ENCODE measurements at regions of chr1 and their contacts with region 1.

Region 1: GRCh38 chr1:19715334-19716203 is 50.9 kb downstream of the HTR6 start:
- DNase-seq: peak; percentile 97
- H3K4me3 ChIP-seq: no peak overlapping the region
- H3K27ac ChIP-seq: no peak overlapping the region
- H3K4me1 ChIP-seq: no peaks in the 10 kb centered on the region
- H3K27me3 ChIP-seq: no peaks in the 10 kb centered on the region
- CTCF ChIP-seq: peak; percentile 96 to 98
- POLR2A ChIP-seq: no peak

Region 2: GRCh38 chr1:19728413-19729145 is 13.0 kb after region 1 on chr1:
- CTCF ChIA-PET with region 1: interaction called, 14 read pairs
- POLR2A ChIA-PET with region 1: no interaction called
- dilution Hi-C with region 1: no loop called
- intact Hi-C with region 1: no loop called
- DNase-seq: no peak
- H3K4me3 ChIP-seq: no peak overlapping the region
- H3K27ac ChIP-seq: no peak overlapping the region
- H3K4me1 ChIP-seq: no peaks in the 10 kb centered on the region
- H3K27me3 ChIP-seq: no peaks in the 10 kb centered on the region
- CTCF ChIP-seq: no peak
- POLR2A ChIP-seq: no peak

Region 3: GRCh38 chr1:19811206-19811851 is 95.8 kb after region 1 on chr1:
- CTCF ChIA-PET with region 1: interaction called, 9 read pairs
- POLR2A ChIA-PET with region 1: no interaction called
- dilution Hi-C with region 1: no loop called
- intact Hi-C with region 1: loop called (anchors 1 kb)
- DNase-seq: peak; percentile 38
- H3K4me3 ChIP-seq: no peak overlapping the region
- H3K27ac ChIP-seq: no peak overlapping the region
- H3K4me1 ChIP-seq: no peaks in the 10 kb centered on the region
- H3K27me3 ChIP-seq: no peaks in the 10 kb centered on the region
- CTCF ChIP-seq: peak; percentile 65 to 79
- POLR2A ChIP-seq: no peak

Region 4: DNA sequence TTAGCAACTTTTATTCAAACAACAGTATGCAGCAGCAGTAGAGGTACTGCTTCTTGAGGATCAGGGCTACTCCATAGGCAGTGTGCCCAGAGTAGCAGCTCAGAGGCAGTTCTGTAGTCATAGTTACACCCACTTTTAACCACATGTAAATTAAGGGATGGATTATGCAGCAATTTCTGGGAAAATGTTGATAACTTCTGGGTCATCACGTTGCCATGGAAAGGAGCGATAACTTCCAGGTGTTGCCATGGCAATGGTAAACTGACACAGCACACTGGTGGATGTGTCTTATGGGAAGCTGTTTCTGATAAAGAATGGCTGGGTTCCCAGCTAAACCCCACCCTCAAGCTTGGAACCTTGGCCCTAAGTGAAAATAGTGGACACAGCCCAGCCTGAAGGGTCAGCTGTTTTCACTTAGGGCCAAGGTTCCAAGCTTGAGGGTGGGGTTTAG is 292.8 kb after region 1 on chr1:
- CTCF ChIA-PET with region 1: no interaction called
- POLR2A ChIA-PET with region 1: no interaction called
- dilution Hi-C with region 1: no loop called
- intact Hi-C with region 1: no loop called
- DNase-seq: no peak
- H3K4me3 ChIP-seq: no peak overlapping the region
- H3K27ac ChIP-seq: no peak overlapping the region
- H3K4me1 ChIP-seq: no peaks in the 10 kb centered on the region
- H3K27me3 ChIP-seq: no peaks in the 10 kb centered on the region
- CTCF ChIP-seq: no peak
- POLR2A ChIP-seq: no peak

Region 5: GRCh38 chr1:20329793-20330542 is 614.4 kb after region 1 on chr1:
- CTCF ChIA-PET with region 1: no interaction called
- POLR2A ChIA-PET with region 1: no interaction called
- dilution Hi-C with region 1: no loop called
- intact Hi-C with region 1: no loop called
- DNase-seq: no peak
- H3K4me3 ChIP-seq: no peak overlapping the region
- H3K27ac ChIP-seq: no peak overlapping the region
- H3K4me1 ChIP-seq: no peaks in the 10 kb centered on the region
- H3K27me3 ChIP-seq: peaks cover 0 to 2% of the 10 kb centered on the region in 2 experiments
- CTCF ChIP-seq: no peak
- POLR2A ChIP-seq: no peak